ENCODE measurements at regions of chr14 and their contacts with region 1.

Region 1: GRCh38 chr14:22589096-22589839 is at the start of gene DAD1:
- DNase-seq: peak; percentile 99 to 100 (median 100)
- ATAC-seq: peak; percentile 86
- H3K4me3 ChIP-seq: peak within 1 kb of the TSS; percentile 64 to 67
- H3K4me3 Mint-ChIP-seq: peak within 1 kb of the TSS; percentile 98
- H3K27ac ChIP-seq: peak within 1 kb of the TSS; percentile 95 to 99
- H3K27ac Mint-ChIP-seq: peak within 1 kb of the TSS; percentile 100
- H3K4me1 ChIP-seq: peaks cover 47% of the 10 kb centered on the region
- H3K4me1 Mint-ChIP-seq: peaks cover 49% of the 10 kb centered on the region
- H3K27me3 ChIP-seq: no peaks in the 10 kb centered on the region
- H3K27me3 Mint-ChIP-seq: no peaks in the 10 kb centered on the region
- CTCF ChIP-seq: no peak
- total RNA-seq, gene DAD1: 27.2 to 35.6 TPM

Region 2: DNA sequence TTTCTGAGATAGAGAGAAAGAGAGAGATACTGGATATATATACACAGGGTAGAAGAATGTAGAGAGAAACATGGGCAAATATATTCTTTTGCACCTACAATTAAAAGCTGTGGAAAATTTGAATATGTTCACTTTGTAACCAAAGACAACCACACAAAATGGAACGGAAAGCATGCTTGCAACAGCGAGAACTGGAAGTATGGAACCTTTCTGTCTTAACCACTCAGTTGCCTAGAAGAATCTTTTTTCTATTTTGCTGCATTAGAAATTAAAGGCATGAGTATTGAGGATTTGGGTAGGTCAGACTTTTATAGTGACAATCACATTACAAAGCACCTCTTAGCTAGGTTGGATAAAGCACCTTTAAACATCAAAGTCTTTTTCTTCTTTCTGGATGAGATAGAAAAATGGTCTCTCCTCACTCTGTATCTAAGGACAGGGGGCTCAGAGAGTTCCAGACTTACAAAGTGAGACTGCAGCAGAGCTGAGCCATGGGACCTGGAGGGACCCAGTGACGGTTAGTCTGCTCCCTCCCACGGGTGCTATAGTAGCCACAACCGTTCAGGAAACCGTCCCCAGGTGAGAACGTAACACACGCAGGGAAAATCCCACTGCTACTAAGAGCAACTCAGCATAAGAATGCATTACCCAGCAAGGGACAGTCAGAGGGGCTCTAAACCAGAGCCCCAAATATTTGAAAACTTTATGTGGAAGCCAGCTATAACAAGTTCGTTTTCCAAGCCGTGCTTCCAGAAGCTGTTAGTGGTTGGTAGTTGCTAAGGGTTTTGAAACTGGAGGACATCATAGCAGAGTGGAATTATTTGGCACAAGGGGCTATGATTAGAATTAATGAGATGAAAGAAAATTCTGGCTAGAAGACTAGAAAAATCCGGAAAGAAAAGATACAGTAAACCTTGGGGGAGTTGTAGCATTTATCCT is 97.3 kb before region 1 on chr14:
- CTCF ChIA-PET with region 1: no interaction called
- POLR2A ChIA-PET with region 1: no interaction called
- intact Hi-C with region 1: no loop called
- DNase-seq: peak in 4 of 9 experiments; percentile 43 to 83 (median 56)
- ATAC-seq: peak; percentile 43
- H3K4me3 ChIP-seq: peak overlapping the region; percentile 33 to 53
- H3K4me3 Mint-ChIP-seq: peak overlapping the region; percentile 84
- H3K27ac ChIP-seq: peak overlapping the region; percentile 32 to 77
- H3K27ac Mint-ChIP-seq: peak overlapping the region; percentile 99
- H3K4me1 ChIP-seq: no peaks in the 10 kb centered on the region
- H3K4me1 Mint-ChIP-seq: peaks cover 34% of the 10 kb centered on the region
- H3K27me3 ChIP-seq: no peaks in the 10 kb centered on the region
- H3K27me3 Mint-ChIP-seq: no peaks in the 10 kb centered on the region
- CTCF ChIP-seq: no peak

Region 3: GRCh38 chr14:22653012-22653621 is 63.8 kb after region 1 on chr14:
- CTCF ChIA-PET with region 1: interaction called, 7 read pairs
- POLR2A ChIA-PET with region 1: no interaction called
- intact Hi-C with region 1: loop called in 1 of 2 experiments (anchors 5 kb)
- DNase-seq: peak; percentile 8 to 70 (median 50)
- ATAC-seq: peak; percentile 94
- H3K4me3 ChIP-seq: no peak overlapping the region
- H3K4me3 Mint-ChIP-seq: no peak overlapping the region
- H3K27ac ChIP-seq: no peak overlapping the region
- H3K27ac Mint-ChIP-seq: no peak overlapping the region
- H3K4me1 ChIP-seq: no peaks in the 10 kb centered on the region
- H3K4me1 Mint-ChIP-seq: no peaks in the 10 kb centered on the region
- H3K27me3 ChIP-seq: no peaks in the 10 kb centered on the region
- H3K27me3 Mint-ChIP-seq: no peaks in the 10 kb centered on the region
- CTCF ChIP-seq: peak; percentile 72

Region 4: GRCh38 chr14:22713631-22713950 is 124.3 kb after region 1 on chr14:
- CTCF ChIA-PET with region 1: no interaction called
- POLR2A ChIA-PET with region 1: no interaction called
- intact Hi-C with region 1: loop called in 1 of 2 experiments (anchors 5 kb)
- DNase-seq: no peak
- ATAC-seq: no peak
- H3K4me3 ChIP-seq: peak overlapping the region; percentile 7 to 49
- H3K4me3 Mint-ChIP-seq: peak overlapping the region; percentile 85
- H3K27ac ChIP-seq: no peak overlapping the region
- H3K27ac Mint-ChIP-seq: no peak overlapping the region
- H3K4me1 ChIP-seq: peaks cover 9% of the 10 kb centered on the region
- H3K4me1 Mint-ChIP-seq: peaks cover 11% of the 10 kb centered on the region
- H3K27me3 ChIP-seq: peaks cover 0 to 7% of the 10 kb centered on the region in 2 experiments
- H3K27me3 Mint-ChIP-seq: peaks cover 31% of the 10 kb centered on the region
- CTCF ChIP-seq: no peak

Region 5: DNA sequence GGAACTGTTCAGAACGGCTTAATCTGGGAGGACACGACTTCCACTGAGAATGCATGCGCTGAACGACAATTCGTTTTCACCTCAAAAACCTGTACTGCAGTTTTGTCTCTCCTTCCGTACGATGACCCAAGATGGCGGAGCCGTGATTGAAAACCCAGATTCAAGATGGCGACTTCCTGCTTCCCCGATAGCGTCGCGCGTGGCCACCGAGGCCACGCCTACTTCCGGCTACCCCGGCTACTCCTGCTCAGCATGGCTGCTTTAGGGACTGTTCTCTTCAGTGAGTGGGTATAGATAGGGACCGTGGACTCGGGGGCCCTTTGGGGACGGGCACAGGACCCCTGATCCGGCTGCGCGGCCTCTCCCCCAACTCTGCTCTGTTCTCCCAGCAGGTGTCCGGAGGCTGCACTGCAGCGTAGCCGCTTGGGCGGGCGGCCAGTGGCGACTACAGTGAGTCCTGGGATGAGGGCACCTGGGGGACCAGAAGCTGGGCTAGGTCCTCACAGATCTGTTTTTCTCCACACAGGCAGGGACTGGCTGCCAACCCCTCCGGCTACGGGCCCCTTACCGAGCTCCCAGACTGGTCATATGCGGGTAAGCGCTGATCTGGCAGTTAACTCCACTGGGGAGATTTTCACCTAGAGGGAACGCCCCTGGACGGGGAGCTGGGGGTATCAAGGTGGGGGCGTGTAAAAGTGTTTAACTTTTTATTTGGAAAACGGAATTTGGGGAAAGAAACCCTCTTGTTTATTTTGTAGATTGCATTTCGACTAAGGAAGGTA is 240.6 kb after region 1 on chr14 and contains the start of gene MRPL52:
- CTCF ChIA-PET with region 1: no interaction called
- POLR2A ChIA-PET with region 1: no interaction called
- intact Hi-C with region 1: loop called (anchors 1 to 5 kb)
- DNase-seq: peak; percentile 81 to 97 (median 90)
- ATAC-seq: peak; percentile 95
- H3K4me3 ChIP-seq: peak within 1 kb of the TSS; percentile 89 to 91
- H3K4me3 Mint-ChIP-seq: peak within 1 kb of the TSS; percentile 92
- H3K27ac ChIP-seq: peak within 1 kb of the TSS; percentile 69 to 90
- H3K27ac Mint-ChIP-seq: peak within 1 kb of the TSS; percentile 96
- H3K4me1 ChIP-seq: peaks cover 13% of the 10 kb centered on the region
- H3K4me1 Mint-ChIP-seq: peaks cover 31% of the 10 kb centered on the region
- H3K27me3 ChIP-seq: peaks cover 0 to 5% of the 10 kb centered on the region in 2 experiments
- H3K27me3 Mint-ChIP-seq: peaks cover 7% of the 10 kb centered on the region
- CTCF ChIP-seq: no peak
- total RNA-seq, gene MRPL52: 22.3 to 25.7 TPM

Region 6: GRCh38 chr14:22918804-22919600 is 329.7 kb after region 1 on chr14 and contains the start of gene RBM23:
- CTCF ChIA-PET with region 1: no interaction called
- POLR2A ChIA-PET with region 1: no interaction called
- intact Hi-C with region 1: loop called (anchors 1 kb)
- DNase-seq: peak; percentile 98 to 100 (median 100)
- ATAC-seq: peak; percentile 91
- H3K4me3 ChIP-seq: peak within 1 kb of the TSS; percentile 59 to 88
- H3K4me3 Mint-ChIP-seq: peak within 1 kb of the TSS; percentile 91
- H3K27ac ChIP-seq: peak within 1 kb of the TSS; percentile 100
- H3K27ac Mint-ChIP-seq: peak within 1 kb of the TSS; percentile 99
- H3K4me1 ChIP-seq: peaks cover 30% of the 10 kb centered on the region
- H3K4me1 Mint-ChIP-seq: peaks cover 42% of the 10 kb centered on the region
- H3K27me3 ChIP-seq: no peaks in the 10 kb centered on the region
- H3K27me3 Mint-ChIP-seq: no peaks in the 10 kb centered on the region
- CTCF ChIP-seq: no peak
- total RNA-seq, gene RBM23: 135 to 141 TPM

Region 7: DNA sequence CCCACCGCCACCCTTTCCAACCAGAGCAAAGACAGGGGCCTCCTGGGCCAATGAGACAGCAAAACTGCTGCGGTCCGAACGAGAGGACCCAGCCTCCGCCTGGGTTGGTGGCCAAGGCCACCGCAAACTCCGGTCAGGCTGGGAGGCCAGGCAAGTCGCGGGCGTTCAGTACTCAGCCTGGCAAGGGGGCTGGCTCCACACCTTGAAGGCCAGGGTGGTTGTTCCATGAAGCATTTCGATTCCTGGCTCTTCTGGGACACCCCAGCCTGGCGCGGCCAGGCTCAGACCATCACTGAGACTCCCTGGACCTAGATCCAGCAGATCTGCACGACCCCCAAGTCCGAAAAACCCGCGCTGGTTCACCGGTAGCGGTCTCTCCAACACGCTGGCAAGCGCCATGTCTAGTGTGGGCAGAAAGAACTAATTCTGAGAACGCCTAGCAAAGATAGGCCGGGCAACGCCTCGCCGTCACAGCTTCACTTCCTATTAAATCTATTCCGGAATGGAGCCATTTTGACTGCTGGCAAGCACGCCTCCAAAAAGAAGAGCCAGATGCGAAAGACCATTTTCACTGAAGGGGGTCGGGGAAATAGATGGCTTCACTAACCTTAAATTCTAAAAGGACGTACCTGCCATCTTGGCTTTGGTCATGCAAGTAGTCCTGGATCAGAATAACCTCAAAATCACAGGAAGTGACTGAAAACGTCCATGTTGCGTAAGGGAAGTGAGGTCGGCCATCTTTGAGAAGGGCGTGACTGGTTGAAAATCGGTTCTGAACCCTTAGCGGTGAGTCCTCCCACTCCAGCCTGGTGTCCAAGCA is 445.4 kb after region 1 on chr14 and contains the start of gene PSMB5:
- CTCF ChIA-PET with region 1: no interaction called
- POLR2A ChIA-PET with region 1: no interaction called
- intact Hi-C with region 1: loop called in 1 of 2 experiments (anchors 1 kb)
- DNase-seq: peak; percentile 74 to 97 (median 87)
- ATAC-seq: peak; percentile 91
- H3K4me3 ChIP-seq: peak within 1 kb of the TSS; percentile 67 to 71
- H3K4me3 Mint-ChIP-seq: peak within 1 kb of the TSS; percentile 90
- H3K27ac ChIP-seq: peak within 1 kb of the TSS; percentile 75 to 97
- H3K27ac Mint-ChIP-seq: peak within 1 kb of the TSS; percentile 98
- H3K4me1 ChIP-seq: peaks cover 21% of the 10 kb centered on the region
- H3K4me1 Mint-ChIP-seq: peaks cover 34% of the 10 kb centered on the region
- H3K27me3 ChIP-seq: no peaks in the 10 kb centered on the region
- H3K27me3 Mint-ChIP-seq: no peaks in the 10 kb centered on the region
- CTCF ChIP-seq: no peak
- total RNA-seq, gene PSMB5: 18.6 to 20.2 TPM

Measured in CD8-positive, alpha-beta T cell (primary cell).